ENCODE measurements at regions of chr16 and their contacts with region 1.

Region 1: DNA sequence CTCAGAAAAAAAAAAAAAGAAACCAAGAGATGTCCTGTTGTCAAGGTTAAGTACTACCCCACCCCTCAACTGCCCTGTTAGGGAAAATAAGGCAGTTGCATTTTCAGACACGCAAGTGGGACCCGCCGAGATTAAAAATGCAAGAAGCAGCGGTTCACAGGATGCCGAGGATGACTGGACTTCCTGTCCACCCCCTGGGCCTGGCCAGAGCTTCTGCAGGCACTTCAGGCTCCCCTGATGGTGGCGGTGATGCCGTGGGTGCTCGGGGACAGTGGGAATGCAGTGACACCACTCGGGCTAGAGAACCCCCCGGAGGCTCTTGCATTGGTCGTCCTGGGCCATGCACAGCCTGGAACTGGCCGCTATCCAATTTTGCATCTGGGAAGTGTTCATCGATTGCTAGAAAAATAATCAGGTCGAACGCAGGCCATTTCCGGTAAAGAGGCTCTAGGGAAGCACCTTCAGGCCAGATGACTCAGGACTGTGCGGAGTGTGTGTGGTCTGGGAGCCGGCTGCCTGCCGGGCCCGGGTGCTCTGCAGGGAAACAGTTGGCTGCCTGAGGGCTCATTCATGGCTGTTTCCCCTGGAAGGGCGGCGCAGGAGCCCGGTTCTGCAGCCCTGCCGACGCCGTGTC is 13.4 kb upstream of the CRISPLD2 start:
- DNase-seq: peak; percentile 80
- H3K4me3 ChIP-seq: peak overlapping the region in 1 of 3 experiments; percentile 28
- H3K27ac ChIP-seq: peak overlapping the region; percentile 41
- H3K4me1 ChIP-seq: peaks cover 19% of the 10 kb centered on the region
- H3K27me3 ChIP-seq: peaks cover 2 to 6% of the 10 kb centered on the region in 2 experiments
- CTCF ChIP-seq: no peak
- POLR2A ChIP-seq: no peak

Region 2: GRCh38 chr16:84726079-84726668 is 80.2 kb before region 1 on chr16:
- CTCF ChIA-PET with region 1: no interaction called
- POLR2A ChIA-PET with region 1: no interaction called
- dilution Hi-C with region 1: no loop called
- intact Hi-C with region 1: no loop called
- DNase-seq: peak; percentile 82
- H3K4me3 ChIP-seq: no peak overlapping the region
- H3K27ac ChIP-seq: no peak overlapping the region
- H3K4me1 ChIP-seq: peaks cover 62% of the 10 kb centered on the region
- H3K27me3 ChIP-seq: no peaks in the 10 kb centered on the region
- CTCF ChIP-seq: peak; percentile 88 to 95
- POLR2A ChIP-seq: no peak

Region 3: GRCh38 chr16:84785843-84786581 is 20.4 kb before region 1 on chr16:
- CTCF ChIA-PET with region 1: no interaction called
- POLR2A ChIA-PET with region 1: no interaction called
- dilution Hi-C with region 1: no loop called
- intact Hi-C with region 1: no loop called
- DNase-seq: peak; percentile 6
- H3K4me3 ChIP-seq: no peak overlapping the region
- H3K27ac ChIP-seq: no peak overlapping the region
- H3K4me1 ChIP-seq: no peaks in the 10 kb centered on the region
- H3K27me3 ChIP-seq: no peaks in the 10 kb centered on the region
- CTCF ChIP-seq: no peak
- POLR2A ChIP-seq: no peak

Region 4: GRCh38 chr16:84819644-84820324 is 13.4 kb after region 1 on chr16 and contains the start of gene CRISPLD2:
- CTCF ChIA-PET with region 1: interaction called, 5 read pairs
- POLR2A ChIA-PET with region 1: interaction called, 4 read pairs
- dilution Hi-C with region 1: no loop called
- intact Hi-C with region 1: loop called (anchors 1 kb)
- DNase-seq: peak; percentile 86
- H3K4me3 ChIP-seq: peak within 1 kb of the TSS in 2 of 3 experiments; percentile 24 to 37
- H3K27ac ChIP-seq: no peak within 1 kb of the TSS
- H3K4me1 ChIP-seq: peaks cover 4% of the 10 kb centered on the region
- H3K27me3 ChIP-seq: peaks cover 6 to 11% of the 10 kb centered on the region in 2 experiments
- CTCF ChIP-seq: no peak
- POLR2A ChIP-seq: no peak
- total RNA-seq, gene CRISPLD2: 0.73 TPM in 1 of 2 replicates, not detected in the other

Region 5: GRCh38 chr16:84881702-84882521 is 75.5 kb after region 1 on chr16:
- CTCF ChIA-PET with region 1: no interaction called
- POLR2A ChIA-PET with region 1: no interaction called
- dilution Hi-C with region 1: no loop called
- intact Hi-C with region 1: loop called (anchors 1 kb)
- DNase-seq: peak; percentile 47
- H3K4me3 ChIP-seq: no peak overlapping the region
- H3K27ac ChIP-seq: no peak overlapping the region
- H3K4me1 ChIP-seq: peaks cover 23% of the 10 kb centered on the region
- H3K27me3 ChIP-seq: no peaks in the 10 kb centered on the region
- CTCF ChIP-seq: no peak
- POLR2A ChIP-seq: no peak

Measured in endothelial cell of umbilical vein (primary cell).